K562 (cell line): ENCODE measurements at regions of chr11 and their contacts with region 1.

Region 1: DNA sequence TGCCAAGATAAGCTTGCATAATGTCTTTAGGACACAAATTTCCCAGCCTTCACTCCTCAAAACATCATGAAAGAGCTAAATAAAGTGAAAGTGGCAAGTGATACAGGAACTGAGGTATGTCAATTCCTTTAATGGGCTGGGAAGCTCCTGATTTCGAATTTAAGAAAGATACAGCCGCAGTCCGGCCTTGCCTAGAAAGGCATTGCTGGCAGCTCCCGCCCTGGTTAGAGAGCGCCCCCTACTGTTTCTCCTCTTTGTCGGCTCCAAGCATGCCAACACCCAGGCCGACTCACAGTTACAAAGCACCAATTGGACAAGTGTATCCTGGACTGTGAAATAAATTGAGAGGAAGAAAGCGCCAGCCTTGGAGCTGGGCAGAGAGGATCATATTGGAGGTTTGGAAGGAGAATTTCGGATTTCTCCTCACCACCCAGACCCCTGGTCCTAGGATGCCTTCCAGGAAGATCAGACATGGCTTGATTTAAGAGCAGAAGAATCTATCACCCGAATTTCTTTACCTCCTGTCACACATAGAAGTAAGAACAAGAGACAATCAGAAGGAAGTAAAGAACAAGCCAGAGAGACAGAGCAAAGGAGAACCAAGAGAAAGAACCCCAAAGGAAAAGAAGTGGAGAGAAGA is 84.0 kb downstream of the FAM76B start:
- DNase-seq: peak; percentile 69 to 90 (median 74)
- ATAC-seq: peak; percentile 90
- H3K4me3 ChIP-seq: no peak overlapping the region
- H3K27ac ChIP-seq: no peak overlapping the region
- H3K4me1 ChIP-seq: peaks cover 4 to 40% of the 10 kb centered on the region in 2 experiments; a peak in 2 of 5 replicates
- H3K27me3 ChIP-seq: no peaks in the 10 kb centered on the region
- CTCF ChIP-seq: peak; percentile 87 to 92 (median 92)
- EP300 ChIP-seq: no peak
- POLR2A ChIP-seq: no peak
- RAD21 ChIP-seq: peak; percentile 97 to 98

Region 2: DNA sequence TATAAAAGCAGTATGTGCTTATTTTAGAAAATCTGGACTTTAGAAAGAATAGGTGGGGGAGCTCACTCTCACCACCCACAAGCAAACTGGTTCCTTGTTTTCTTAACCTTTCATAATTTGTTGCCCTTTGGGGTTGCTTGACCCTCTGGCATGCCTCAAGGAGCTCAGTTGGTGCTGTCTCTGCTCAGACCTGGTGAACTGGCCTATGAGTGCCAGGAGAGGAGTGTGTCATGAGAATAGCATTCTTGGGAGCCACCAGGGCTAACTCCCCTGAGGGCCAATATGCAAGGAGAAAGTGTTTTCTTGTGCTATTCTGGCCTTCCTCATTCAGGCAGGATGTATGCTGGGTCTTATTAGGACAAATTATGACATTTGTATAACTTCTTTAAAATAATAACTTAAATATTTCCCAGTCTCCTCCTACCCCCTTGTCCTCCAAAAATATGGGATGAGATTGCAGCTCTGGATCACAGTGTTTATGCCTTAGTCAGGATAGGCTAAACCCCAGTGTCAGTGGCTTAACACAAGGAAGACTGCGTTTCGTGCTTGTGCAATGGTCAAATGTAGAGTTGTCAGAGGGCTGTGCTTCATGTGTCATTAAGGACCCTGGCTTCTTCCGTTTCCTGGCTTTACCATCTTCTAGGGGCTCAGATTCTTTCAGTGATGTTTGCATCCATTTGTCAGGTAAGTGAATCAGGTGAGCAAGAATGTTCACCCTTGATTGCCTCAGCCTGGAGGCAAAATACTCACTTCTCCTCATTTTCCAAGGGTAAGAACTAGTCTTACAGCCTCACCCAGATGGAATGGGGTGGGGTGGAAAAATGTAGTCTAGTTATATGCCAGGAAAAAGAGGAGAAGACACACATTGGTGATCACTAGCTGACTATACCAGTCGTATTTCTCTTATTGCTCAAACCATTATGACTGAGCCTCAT is 958.2 kb before region 1 on chr11:
- CTCF ChIA-PET with region 1: no interaction called
- POLR2A ChIA-PET with region 1: no interaction called
- in situ Hi-C with region 1: no loop called
- intact Hi-C with region 1: no loop called
- DNase-seq: no peak
- ATAC-seq: no peak
- H3K4me3 ChIP-seq: no peak overlapping the region
- H3K27ac ChIP-seq: no peak overlapping the region
- H3K4me1 ChIP-seq: peaks cover 3 to 19% of the 10 kb centered on the region in 2 experiments; a peak in 3 of 5 replicates
- H3K27me3 ChIP-seq: no peaks in the 10 kb centered on the region
- CTCF ChIP-seq: no peak
- EP300 ChIP-seq: no peak
- POLR2A ChIP-seq: no peak
- RAD21 ChIP-seq: no peak

Region 3: GRCh38 chr11:95163106-95163505 is 542.5 kb before region 1 on chr11:
- CTCF ChIA-PET with region 1: interaction called, 3 read pairs
- POLR2A ChIA-PET with region 1: no interaction called
- in situ Hi-C with region 1: loop called (anchors 5 kb)
- intact Hi-C with region 1: no loop called
- DNase-seq: no peak
- ATAC-seq: no peak
- H3K4me3 ChIP-seq: no peak overlapping the region
- H3K27ac ChIP-seq: no peak overlapping the region
- H3K4me1 ChIP-seq: no peaks in the 10 kb centered on the region
- H3K27me3 ChIP-seq: no peaks in the 10 kb centered on the region
- CTCF ChIP-seq: no peak
- EP300 ChIP-seq: no peak
- POLR2A ChIP-seq: no peak
- RAD21 ChIP-seq: no peak

Region 4: DNA sequence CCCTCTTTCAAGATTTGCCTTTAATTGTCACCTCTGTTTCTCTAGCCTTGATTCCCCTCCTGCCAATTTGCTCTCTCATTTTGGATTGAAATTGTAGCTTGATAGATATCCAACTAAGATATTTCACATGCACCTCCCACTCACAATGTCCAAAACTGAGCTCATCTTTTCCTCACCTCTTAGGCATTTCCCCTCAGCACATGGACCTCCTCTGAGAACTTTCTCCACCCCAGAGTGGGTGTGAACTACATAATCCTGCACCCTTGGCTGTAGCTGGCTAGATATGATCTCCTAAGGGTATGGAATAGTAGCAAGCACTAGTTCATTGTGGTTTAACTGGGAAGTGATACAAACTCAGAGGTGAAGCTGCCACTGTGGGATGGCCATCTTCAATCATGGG is 383.1 kb before region 1 on chr11:
- CTCF ChIA-PET with region 1: no interaction called
- POLR2A ChIA-PET with region 1: no interaction called
- in situ Hi-C with region 1: no loop called
- intact Hi-C with region 1: no loop called
- DNase-seq: no peak
- ATAC-seq: no peak
- H3K4me3 ChIP-seq: no peak overlapping the region
- H3K27ac ChIP-seq: no peak overlapping the region
- H3K4me1 ChIP-seq: no peaks in the 10 kb centered on the region; a peak in 2 of 5 replicates
- H3K27me3 ChIP-seq: peaks cover 0 to 8% of the 10 kb centered on the region in 2 experiments; a peak in 2 of 5 replicates
- CTCF ChIP-seq: no peak
- EP300 ChIP-seq: no peak
- POLR2A ChIP-seq: no peak
- RAD21 ChIP-seq: no peak

Region 5: DNA sequence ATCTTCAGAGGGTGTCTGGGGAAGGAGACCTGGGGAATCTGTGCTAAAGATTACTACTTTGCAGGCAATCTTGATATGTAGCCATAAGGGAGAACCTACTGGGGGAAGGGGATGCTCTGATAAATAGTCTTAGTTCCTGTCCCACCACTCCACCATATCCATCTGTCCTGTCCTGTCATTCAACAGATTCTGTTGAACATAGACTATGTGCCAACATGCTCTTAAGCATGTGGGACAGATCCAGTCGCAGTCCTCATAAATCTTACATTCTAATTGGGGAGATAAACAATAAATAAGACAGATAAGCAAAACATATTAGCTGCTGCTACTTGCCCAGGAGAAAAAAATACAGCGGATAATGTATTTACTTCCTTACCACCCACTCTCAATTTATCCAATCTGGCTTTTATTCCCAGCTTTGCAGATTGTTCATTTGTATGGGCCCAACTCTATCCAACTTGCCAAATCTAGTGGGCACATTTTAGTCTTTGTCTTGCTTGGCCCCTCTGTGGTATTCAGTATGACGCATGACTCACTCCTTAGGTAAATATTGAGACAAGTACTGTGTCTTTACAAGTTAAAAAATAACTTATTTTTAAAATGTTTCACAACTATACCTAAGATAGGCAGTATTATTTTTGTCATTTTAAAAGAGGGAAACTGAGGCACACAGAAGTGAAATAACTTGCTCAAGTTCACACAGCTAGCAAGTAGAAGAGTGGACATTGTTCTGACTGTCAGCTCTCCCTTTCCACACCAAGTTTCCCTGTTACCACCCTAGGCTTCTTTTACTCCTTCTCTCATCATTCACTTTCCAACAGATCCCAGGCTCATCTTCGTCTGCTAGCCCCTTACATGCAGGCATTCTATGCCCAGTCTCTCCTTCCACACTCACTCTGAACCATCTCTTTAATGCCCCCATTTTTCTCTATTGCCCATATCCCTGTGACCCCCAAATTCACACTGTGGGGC is 341.0 kb before region 1 on chr11:
- CTCF ChIA-PET with region 1: no interaction called
- POLR2A ChIA-PET with region 1: no interaction called
- in situ Hi-C with region 1: no loop called
- intact Hi-C with region 1: loop called (anchors 1 kb)
- DNase-seq: no peak
- ATAC-seq: no peak
- H3K4me3 ChIP-seq: no peak overlapping the region
- H3K27ac ChIP-seq: no peak overlapping the region
- H3K4me1 ChIP-seq: no peaks in the 10 kb centered on the region
- H3K27me3 ChIP-seq: peaks cover 0 to 6% of the 10 kb centered on the region in 2 experiments; a peak in 2 of 5 replicates
- CTCF ChIP-seq: no peak
- EP300 ChIP-seq: no peak
- POLR2A ChIP-seq: no peak
- RAD21 ChIP-seq: no peak

Region 6: GRCh38 chr11:95404330-95404729 is 301.3 kb before region 1 on chr11:
- CTCF ChIA-PET with region 1: no interaction called
- POLR2A ChIA-PET with region 1: no interaction called
- in situ Hi-C with region 1: no loop called
- intact Hi-C with region 1: no loop called
- DNase-seq: no peak
- ATAC-seq: no peak
- H3K4me3 ChIP-seq: no peak overlapping the region
- H3K27ac ChIP-seq: no peak overlapping the region
- H3K4me1 ChIP-seq: no peaks in the 10 kb centered on the region
- H3K27me3 ChIP-seq: no peaks in the 10 kb centered on the region
- CTCF ChIP-seq: no peak
- EP300 ChIP-seq: no peak
- POLR2A ChIP-seq: no peak
- RAD21 ChIP-seq: 0 out of 4 replicates have a peak, but pooled peaks of 1 of the 2 experiments have one; percentile 5

Region 7: GRCh38 chr11:95545116-95545875 is 160.3 kb before region 1 on chr11:
- CTCF ChIA-PET with region 1: no interaction called
- POLR2A ChIA-PET with region 1: no interaction called
- in situ Hi-C with region 1: no loop called
- intact Hi-C with region 1: loop called (anchors 10 kb)
- DNase-seq: peak in 3 of 4 experiments; percentile 27 to 44 (median 29)
- ATAC-seq: peak; percentile 54
- H3K4me3 ChIP-seq: no peak overlapping the region
- H3K27ac ChIP-seq: no peak overlapping the region; the same call in 2 of the 3 replicates
- H3K4me1 ChIP-seq: peaks cover 3 to 51% of the 10 kb centered on the region in 2 experiments; a peak in 3 of 5 replicates
- H3K27me3 ChIP-seq: no peaks in the 10 kb centered on the region; a peak in 1 of 5 replicates
- CTCF ChIP-seq: peak in 1 of 3 experiments; percentile 36; a peak in 4 of 6 replicates
- EP300 ChIP-seq: no peak
- POLR2A ChIP-seq: no peak
- RAD21 ChIP-seq: no peak

Region 8: GRCh38 chr11:95692526-95693260 is 12.9 kb before region 1 on chr11:
- CTCF ChIA-PET with region 1: no interaction called
- POLR2A ChIA-PET with region 1: interaction called, 10 read pairs
- in situ Hi-C with region 1: no loop called
- intact Hi-C with region 1: no loop called
- DNase-seq: no peak
- ATAC-seq: no peak
- H3K4me3 ChIP-seq: no peak overlapping the region
- H3K27ac ChIP-seq: no peak overlapping the region
- H3K4me1 ChIP-seq: no peaks in the 10 kb centered on the region; a peak in 1 of 5 replicates
- H3K27me3 ChIP-seq: no peaks in the 10 kb centered on the region
- CTCF ChIP-seq: no peak
- EP300 ChIP-seq: no peak
- POLR2A ChIP-seq: no peak
- RAD21 ChIP-seq: no peak

Region 9: DNA sequence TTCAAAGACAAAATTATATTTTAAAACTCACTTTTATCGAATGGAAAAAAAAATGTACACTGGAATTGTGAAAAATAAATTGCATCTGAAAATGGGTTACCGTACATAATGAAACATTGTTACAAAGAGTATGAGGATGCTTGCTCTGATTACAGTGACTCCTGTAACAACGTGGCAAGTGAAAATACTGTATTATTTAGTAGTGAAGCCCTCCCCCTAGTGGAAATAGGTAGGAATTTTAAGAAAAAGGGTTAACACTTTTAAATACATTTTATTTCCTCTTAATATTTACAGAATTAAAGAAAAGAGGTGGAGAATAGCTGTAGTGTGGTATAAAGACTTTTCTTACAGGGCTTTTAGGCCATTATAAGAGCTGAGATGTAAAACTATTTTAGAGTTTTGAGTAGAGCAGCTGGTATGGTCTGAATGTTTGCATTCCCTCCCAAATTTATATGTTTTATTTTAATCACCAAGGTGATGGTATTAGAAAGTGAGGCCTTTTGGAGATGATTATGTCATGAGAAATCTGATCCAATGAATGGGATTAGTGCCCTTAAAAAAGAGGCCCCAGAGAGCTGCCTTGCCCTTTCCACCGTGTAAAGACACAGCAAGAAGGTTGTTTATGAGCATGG is 58.8 kb after region 1 on chr11:
- CTCF ChIA-PET with region 1: no interaction called
- POLR2A ChIA-PET with region 1: no interaction called
- in situ Hi-C with region 1: no loop called
- intact Hi-C with region 1: loop called (anchors 1 kb)
- DNase-seq: peak; percentile 54 to 65 (median 60)
- ATAC-seq: peak; percentile 81
- H3K4me3 ChIP-seq: no peak overlapping the region
- H3K27ac ChIP-seq: no peak overlapping the region
- H3K4me1 ChIP-seq: no peaks in the 10 kb centered on the region
- H3K27me3 ChIP-seq: no peaks in the 10 kb centered on the region
- CTCF ChIP-seq: peak; percentile 38 to 78 (median 54); a peak in 4 of 6 replicates
- EP300 ChIP-seq: no peak
- POLR2A ChIP-seq: no peak
- RAD21 ChIP-seq: peak; percentile 93 to 96